ENCODE measurements at regions of chr11 and their contacts with region 1.

Region 1: GRCh38 chr11:120182790-120183491 is 27.9 kb upstream of the OAF start:
- DNase-seq: peak; percentile 77
- ATAC-seq: peak; percentile 82
- H3K4me3 Mint-ChIP-seq: no peak overlapping the region
- H3K27ac Mint-ChIP-seq: no peak overlapping the region
- H3K4me1 Mint-ChIP-seq: peaks cover 30% of the 10 kb centered on the region
- H3K27me3 Mint-ChIP-seq: peaks cover 65% of the 10 kb centered on the region
- CTCF ChIP-seq: no peak

Region 2: GRCh38 chr11:120197251-120197891 is 14.4 kb after region 1 on chr11:
- CTCF ChIA-PET with region 1: interaction called, 109 read pairs
- POLR2A ChIA-PET with region 1: no interaction called
- DNase-seq: no peak
- ATAC-seq: peak; percentile 70
- H3K4me3 Mint-ChIP-seq: no peak overlapping the region; the same call in 1 of the 2 replicates
- H3K27ac Mint-ChIP-seq: no peak overlapping the region
- H3K4me1 Mint-ChIP-seq: peaks cover 47% of the 10 kb centered on the region
- H3K27me3 Mint-ChIP-seq: peaks cover 79% of the 10 kb centered on the region
- CTCF ChIP-seq: no peak

Region 3: GRCh38 chr11:120210626-120211521 is 27.9 kb after region 1 on chr11 and contains the start of gene OAF:
- CTCF ChIA-PET with region 1: interaction called, 28 read pairs
- POLR2A ChIA-PET with region 1: interaction called, 4 read pairs
- DNase-seq: peak; percentile 87
- ATAC-seq: peak; percentile 85
- H3K4me3 Mint-ChIP-seq: peak within 1 kb of the TSS; percentile 79
- H3K27ac Mint-ChIP-seq: no peak within 1 kb of the TSS
- H3K4me1 Mint-ChIP-seq: peaks cover 26% of the 10 kb centered on the region
- H3K27me3 Mint-ChIP-seq: peaks cover 94% of the 10 kb centered on the region
- CTCF ChIP-seq: no peak
- total RNA-seq, gene OAF: 3.2 to 5.6 TPM (median 4.2 TPM) in 3 replicates

Region 4: GRCh38 chr11:120229451-120230424 is 46.8 kb after region 1 on chr11:
- CTCF ChIA-PET with region 1: interaction called, 73 read pairs
- POLR2A ChIA-PET with region 1: no interaction called
- DNase-seq: peak; percentile 57
- ATAC-seq: peak; percentile 49
- H3K4me3 Mint-ChIP-seq: no peak overlapping the region
- H3K27ac Mint-ChIP-seq: no peak overlapping the region
- H3K4me1 Mint-ChIP-seq: peaks cover 14% of the 10 kb centered on the region
- H3K27me3 Mint-ChIP-seq: peaks cover 2% of the 10 kb centered on the region; the same call in 1 of the 2 replicates
- CTCF ChIP-seq: peak; percentile 41

Region 5: DNA sequence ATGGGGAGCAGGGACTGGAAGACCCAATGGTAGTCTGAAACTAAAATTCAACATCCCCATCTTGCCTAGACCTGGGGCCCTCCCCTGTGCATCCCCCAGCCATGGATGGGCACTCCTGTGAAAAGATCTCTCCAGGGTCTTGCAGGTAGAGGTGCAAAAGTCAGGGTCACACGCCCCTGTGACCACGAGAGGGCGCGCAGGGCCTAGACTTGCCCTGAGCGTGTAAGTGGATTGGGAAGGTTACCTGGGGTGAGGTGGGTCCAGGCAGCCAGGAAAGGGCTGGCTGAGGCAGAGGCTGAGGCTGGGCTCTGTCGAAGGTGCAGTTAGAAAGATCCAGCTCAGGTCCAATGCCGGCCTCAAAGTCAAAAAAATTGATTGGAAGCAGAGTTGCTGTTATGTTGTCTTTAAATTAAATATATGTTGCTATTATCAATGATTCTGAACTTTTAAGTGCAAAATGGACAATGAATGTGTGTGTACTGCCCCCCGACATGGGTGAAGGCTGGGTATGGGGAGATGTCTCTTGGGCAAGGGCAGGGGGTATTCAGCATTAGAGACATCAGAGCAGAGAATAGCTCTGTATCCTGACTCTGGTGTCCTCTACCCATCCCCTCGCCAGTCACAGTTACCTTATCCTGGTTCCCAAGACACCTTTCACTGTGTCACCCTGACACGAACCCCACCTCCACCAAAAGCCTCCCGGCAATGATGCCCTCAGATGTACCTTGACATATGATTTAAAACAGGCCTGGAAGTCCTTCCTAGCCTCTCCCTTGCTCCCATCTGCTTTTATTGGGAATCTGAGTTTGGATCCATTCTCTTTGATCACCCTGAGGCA is 52.3 kb after region 1 on chr11:
- CTCF ChIA-PET with region 1: interaction called, 73 read pairs
- POLR2A ChIA-PET with region 1: no interaction called
- DNase-seq: peak; percentile 91
- ATAC-seq: peak; percentile 67
- H3K4me3 Mint-ChIP-seq: no peak overlapping the region
- H3K27ac Mint-ChIP-seq: no peak overlapping the region
- H3K4me1 Mint-ChIP-seq: peaks cover 25% of the 10 kb centered on the region
- H3K27me3 Mint-ChIP-seq: peaks cover 31% of the 10 kb centered on the region
- CTCF ChIP-seq: peak; percentile 89